Natural killer cell (primary cell): ENCODE measurements at regions of chr9 and their contacts with region 1.

Region 1: GRCh38 chr9:137295238-137295811 is 6.7 kb downstream of the NRARP start:
- DNase-seq: peak; percentile 72 to 75
- ATAC-seq: peak; percentile 91 to 96 (median 94)
- H3K4me3 ChIP-seq: no peak overlapping the region
- H3K4me3 Mint-ChIP-seq: peak overlapping the region; percentile 17
- H3K27ac ChIP-seq: no peak overlapping the region
- H3K27ac Mint-ChIP-seq: no peak overlapping the region
- H3K4me1 ChIP-seq: peaks cover 18% of the 10 kb centered on the region
- H3K4me1 Mint-ChIP-seq: peaks cover 0 to 16% of the 10 kb centered on the region in 2 donors
- H3K27me3 ChIP-seq: peaks cover 38% of the 10 kb centered on the region
- H3K27me3 Mint-ChIP-seq: peaks cover 9 to 17% of the 10 kb centered on the region in 2 donors
- CTCF ChIP-seq: peak; percentile 64

Region 2: GRCh38 chr9:137406876-137407589 is 111.7 kb after region 1 on chr9:
- intact Hi-C with region 1: loop called (anchors 2 kb)
- DNase-seq: peak; percentile 77 to 81
- ATAC-seq: peak; percentile 88 to 90 (median 89)
- H3K4me3 ChIP-seq: no peak overlapping the region
- H3K4me3 Mint-ChIP-seq: peak overlapping the region; percentile 4
- H3K27ac ChIP-seq: no peak overlapping the region
- H3K27ac Mint-ChIP-seq: peak overlapping the region in 1 of 2 donors; percentile 22
- H3K4me1 ChIP-seq: peaks cover 40% of the 10 kb centered on the region
- H3K4me1 Mint-ChIP-seq: peaks cover 16 to 26% of the 10 kb centered on the region in 2 donors
- H3K27me3 ChIP-seq: peaks cover 3% of the 10 kb centered on the region
- H3K27me3 Mint-ChIP-seq: peaks cover 0 to 2% of the 10 kb centered on the region in 2 donors
- CTCF ChIP-seq: peak; percentile 87

Region 3: GRCh38 chr9:137521405-137521985 is 226.2 kb after region 1 on chr9:
- intact Hi-C with region 1: loop called (anchors 10 kb)
- DNase-seq: no peak
- ATAC-seq: peak; percentile 55 to 75 (median 59)
- H3K4me3 ChIP-seq: no peak overlapping the region
- H3K4me3 Mint-ChIP-seq: peak overlapping the region; percentile 42
- H3K27ac ChIP-seq: no peak overlapping the region
- H3K27ac Mint-ChIP-seq: peak overlapping the region in 1 of 2 donors; percentile 24
- H3K4me1 ChIP-seq: peaks cover 16% of the 10 kb centered on the region
- H3K4me1 Mint-ChIP-seq: peaks cover 12 to 14% of the 10 kb centered on the region in 2 donors
- H3K27me3 ChIP-seq: no peaks in the 10 kb centered on the region
- H3K27me3 Mint-ChIP-seq: no peaks in the 10 kb centered on the region
- CTCF ChIP-seq: no peak